ENCODE measurements at regions of chr17 and their contacts with region 1.

Region 1: DNA sequence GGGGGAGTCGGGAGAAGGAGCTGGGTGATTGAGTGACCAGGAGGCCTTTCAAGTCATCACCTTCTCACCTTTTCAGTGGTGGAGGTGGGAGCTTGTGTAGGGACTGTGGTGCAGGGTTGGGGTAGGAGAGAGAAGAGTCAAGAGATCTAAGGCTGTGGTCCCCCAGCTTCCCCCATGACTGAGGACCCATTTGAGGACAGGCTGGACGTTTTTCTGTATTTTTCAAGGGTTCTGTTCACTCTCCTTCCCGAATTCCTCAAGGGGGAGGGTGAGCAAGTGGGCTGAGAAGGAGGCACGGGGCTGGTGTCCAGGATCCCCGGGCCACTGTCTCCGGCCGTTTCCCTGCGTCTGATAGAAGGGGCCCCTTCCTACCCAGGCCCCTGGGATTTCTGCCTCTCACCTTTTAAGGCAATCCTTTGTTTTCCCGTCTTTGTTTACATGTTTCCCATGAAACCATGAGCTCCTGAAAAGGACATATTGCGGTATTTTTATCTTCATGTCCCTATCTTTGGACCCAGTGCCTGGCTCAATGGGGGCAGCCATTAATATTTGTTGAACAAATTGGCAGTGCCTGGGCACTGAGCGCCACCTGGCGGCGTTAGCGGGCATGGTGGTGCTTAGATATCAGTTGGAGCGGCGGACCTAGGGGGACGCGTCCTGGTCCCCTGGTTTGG is 9.2 kb upstream of the CD300A start:
- DNase-seq: peak in 2 of 3 donors; percentile 72 to 80
- H3K4me3 ChIP-seq: peak overlapping the region in 1 of 7 experiments; percentile 6
- H3K27ac ChIP-seq: no peak overlapping the region
- H3K4me1 ChIP-seq: peaks cover 1 to 61% (median 61%) of the 10 kb centered on the region in 4 experiments
- H3K27me3 ChIP-seq: peaks cover 0 to 5% (median 0%) of the 10 kb centered on the region in 5 experiments

Region 2: DNA sequence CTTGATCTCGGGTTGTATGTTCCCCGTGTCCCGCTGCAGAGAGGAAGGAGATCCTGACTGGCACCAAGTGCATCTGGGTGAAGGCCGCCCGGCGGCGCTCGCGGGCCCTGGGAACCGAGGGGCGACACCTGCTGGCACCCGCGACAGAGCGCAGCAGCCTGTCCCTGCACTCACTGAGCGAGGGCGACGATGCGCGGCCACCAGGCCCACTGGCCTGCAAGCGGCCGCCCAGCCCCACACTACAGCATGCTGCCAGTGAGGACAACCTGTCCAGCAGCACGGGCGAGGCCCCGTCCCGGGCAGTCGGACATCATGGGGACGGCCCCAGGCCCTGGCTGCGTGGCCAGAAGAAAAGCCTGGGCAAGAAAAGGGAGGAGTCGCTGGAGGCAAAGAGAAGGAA is 103.2 kb before region 1 on chr17:
- CTCF ChIA-PET with region 1: interaction called, 11 read pairs
- POLR2A ChIA-PET with region 1: no interaction called
- DNase-seq: peak; percentile 79 to 81 (median 81)
- H3K4me3 ChIP-seq: peak overlapping the region in 1 of 7 experiments; percentile 28
- H3K27ac ChIP-seq: no peak overlapping the region
- H3K4me1 ChIP-seq: peaks cover 0 to 31% (median 21%) of the 10 kb centered on the region in 4 experiments
- H3K27me3 ChIP-seq: peaks cover 0 to 91% (median 40%) of the 10 kb centered on the region in 5 experiments

Region 3: DNA sequence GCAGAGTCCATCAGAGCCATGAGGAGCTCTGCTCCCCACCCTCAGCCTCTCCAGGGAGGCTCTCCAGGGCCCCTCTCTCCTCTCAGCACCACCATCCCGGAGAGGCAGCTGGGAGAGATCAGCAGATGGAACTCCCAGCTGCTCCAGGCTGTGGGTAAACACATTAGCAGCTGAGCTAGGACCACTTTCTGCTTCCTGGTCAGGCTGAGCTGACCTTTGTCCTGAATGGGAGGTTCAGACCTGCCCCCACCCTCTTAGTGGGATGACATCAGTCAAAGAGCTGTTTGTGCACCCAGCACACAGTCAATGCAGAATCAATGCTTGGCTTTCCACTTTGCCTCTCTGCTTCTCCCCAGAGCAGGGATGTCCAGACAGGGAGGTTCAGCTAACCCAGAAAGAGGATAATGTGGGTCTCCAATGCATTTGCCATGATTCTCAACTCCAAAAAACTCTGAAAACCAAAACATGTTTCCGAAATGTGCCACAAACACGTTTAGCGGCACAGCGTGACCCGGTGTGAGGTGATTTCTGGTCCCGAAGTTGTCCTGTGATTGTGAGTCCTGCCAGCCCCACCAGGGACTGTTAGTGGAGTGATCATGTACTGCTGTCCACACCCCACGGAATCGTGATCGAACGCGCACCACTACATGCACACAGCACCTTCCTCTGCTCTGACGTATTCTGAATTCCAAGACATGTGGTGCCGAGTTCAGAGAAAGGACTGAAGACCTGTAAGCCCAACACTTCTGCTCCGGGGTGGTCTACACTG is 83.3 kb before region 1 on chr17:
- CTCF ChIA-PET with region 1: interaction called, 184 read pairs
- POLR2A ChIA-PET with region 1: no interaction called
- DNase-seq: no peak
- H3K4me3 ChIP-seq: no peak overlapping the region
- H3K27ac ChIP-seq: no peak overlapping the region
- H3K4me1 ChIP-seq: peaks cover under 1 to 12% (median 9%) of the 10 kb centered on the region in 4 experiments
- H3K27me3 ChIP-seq: no peaks in the 10 kb centered on the region

Region 4: DNA sequence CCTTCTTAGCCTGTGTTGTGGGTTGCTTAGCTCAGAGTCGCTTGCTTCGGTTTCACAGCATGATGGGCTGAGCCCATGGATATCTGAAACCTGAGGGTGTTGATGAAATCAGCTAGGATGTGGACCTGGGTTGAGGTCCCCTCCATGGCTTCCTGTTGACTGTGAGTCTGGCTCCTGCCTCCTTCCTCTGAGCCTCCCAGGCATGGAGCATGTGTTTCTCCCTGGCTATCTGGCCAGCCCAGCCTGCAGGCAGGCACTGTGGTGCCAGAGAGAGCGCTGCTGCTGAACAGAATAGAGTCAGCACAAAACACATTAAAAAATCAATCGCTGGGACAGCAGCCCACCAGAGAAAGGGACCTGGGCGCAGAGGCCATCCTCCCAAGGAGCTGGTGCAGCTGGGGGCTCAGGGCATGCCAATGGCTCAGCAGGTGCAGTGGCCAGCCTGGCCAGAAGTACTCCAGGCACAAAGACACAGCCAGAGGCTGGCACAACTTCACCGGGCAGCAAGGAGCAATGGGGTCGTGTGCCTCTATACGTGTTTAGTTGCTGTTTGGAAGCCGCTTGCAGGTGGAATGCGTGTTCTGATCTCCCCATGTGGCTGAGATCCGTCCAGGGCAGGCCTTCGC is 53.7 kb before region 1 on chr17:
- CTCF ChIA-PET with region 1: interaction called, 10 read pairs
- POLR2A ChIA-PET with region 1: no interaction called
- DNase-seq: peak in 2 of 3 donors; percentile 14 to 31
- H3K4me3 ChIP-seq: no peak overlapping the region
- H3K27ac ChIP-seq: no peak overlapping the region
- H3K4me1 ChIP-seq: peaks cover 0 to 8% (median 6%) of the 10 kb centered on the region in 4 experiments
- H3K27me3 ChIP-seq: peaks cover 0 to 2% (median 0%) of the 10 kb centered on the region in 5 experiments

Region 5: GRCh38 chr17:74442670-74443515 is 14.4 kb before region 1 on chr17:
- CTCF ChIA-PET with region 1: interaction called, 63 read pairs
- POLR2A ChIA-PET with region 1: no interaction called
- DNase-seq: peak; percentile 82 to 87 (median 86)
- H3K4me3 ChIP-seq: peak overlapping the region in 5 of 7 experiments; percentile 34 to 69 (median 51)
- H3K27ac ChIP-seq: peak overlapping the region in 1 of 2 experiments; percentile 82
- H3K4me1 ChIP-seq: peaks cover 0 to 69% (median 47%) of the 10 kb centered on the region in 4 experiments
- H3K27me3 ChIP-seq: no peaks in the 10 kb centered on the region

Region 6: GRCh38 chr17:74499992-74500391 is 42.7 kb after region 1 on chr17:
- CTCF ChIA-PET with region 1: interaction called, 11 read pairs
- POLR2A ChIA-PET with region 1: interaction called, 4 read pairs
- DNase-seq: no peak
- H3K4me3 ChIP-seq: no peak overlapping the region
- H3K27ac ChIP-seq: no peak overlapping the region
- H3K4me1 ChIP-seq: peaks cover 0 to 6% (median 2%) of the 10 kb centered on the region in 4 experiments
- H3K27me3 ChIP-seq: no peaks in the 10 kb centered on the region

Measured in common myeloid progenitor, CD34-positive (primary cell).